Gastrocnemius medialis (tissue), 4 donors: ENCODE measurements at regions of chr20 and their contacts with region 1.

Region 1: GRCh38 chr20:31674895-31675827 is 37.4 kb downstream of the COX4I2 start:
- DNase-seq: peak; percentile 50 to 73
- ATAC-seq: peak in 1 of 2 donors; percentile 15
- H3K4me3 ChIP-seq: peak overlapping the region in 1 of 4 donors; percentile 16
- H3K27ac ChIP-seq: peak overlapping the region; percentile 82 to 98 (median 92)
- H3K4me1 ChIP-seq: peaks cover 81 to 93% of the 10 kb centered on the region in 2 donors
- H3K27me3 ChIP-seq: no peaks in the 10 kb centered on the region
- CTCF ChIP-seq: no peak
- POLR2A ChIP-seq: no peak

Region 2: DNA sequence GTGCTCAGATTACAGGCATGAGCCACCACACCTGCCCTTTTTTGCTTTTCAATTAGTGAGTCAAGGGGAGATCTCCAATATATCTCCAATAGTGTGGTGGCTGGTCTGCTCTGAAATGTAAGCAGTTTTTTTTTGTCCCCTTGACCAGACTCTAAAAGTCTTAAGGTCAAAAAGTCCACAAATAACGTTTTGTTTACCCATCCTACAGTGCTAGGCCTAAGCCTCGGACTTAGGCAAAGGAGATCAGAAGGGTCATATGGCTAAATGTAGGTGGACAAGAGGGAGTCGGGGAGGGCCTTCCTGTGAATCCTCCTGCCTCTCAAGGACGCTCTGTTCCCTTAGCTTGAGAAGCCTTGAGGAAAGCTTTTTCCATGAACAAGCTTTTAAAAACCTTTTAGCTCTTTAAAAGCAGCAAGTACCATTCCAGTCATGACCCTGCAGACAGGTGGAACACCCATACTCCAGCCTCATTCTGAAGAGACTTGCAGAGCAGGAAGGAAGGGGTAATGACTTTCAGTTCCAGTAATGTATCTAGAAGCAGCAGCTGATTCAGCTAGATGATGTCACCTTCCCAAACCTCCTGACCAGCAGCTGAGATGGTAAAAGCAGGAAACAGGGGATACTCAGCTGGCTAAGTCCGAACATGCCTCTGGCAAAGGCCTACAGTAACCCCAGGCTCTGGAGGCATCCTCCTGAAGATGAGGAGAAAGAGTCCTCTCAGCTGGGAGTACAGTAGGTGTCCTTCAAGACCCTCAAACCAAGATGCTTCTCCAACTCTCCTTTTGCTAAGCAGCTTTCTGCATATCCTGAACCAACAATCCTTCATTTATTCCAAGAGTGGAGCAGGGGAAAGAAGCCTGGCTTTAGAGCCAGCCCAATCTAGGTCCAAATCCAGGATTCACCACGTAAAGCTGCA is 23.9 kb after region 1 on chr20:
- in situ Hi-C with region 1: no loop called
- intact Hi-C with region 1: loop called (anchors 2 kb)
- DNase-seq: peak; percentile 83 to 87
- ATAC-seq: peak; percentile 96 to 97
- H3K4me3 ChIP-seq: peak overlapping the region in 1 of 4 donors; percentile 30
- H3K27ac ChIP-seq: peak overlapping the region; percentile 86 to 93 (median 90)
- H3K4me1 ChIP-seq: peaks cover 75 to 87% of the 10 kb centered on the region in 2 donors
- H3K27me3 ChIP-seq: no peaks in the 10 kb centered on the region
- CTCF ChIP-seq: no peak
- POLR2A ChIP-seq: peak; percentile 54 to 65

Region 3: DNA sequence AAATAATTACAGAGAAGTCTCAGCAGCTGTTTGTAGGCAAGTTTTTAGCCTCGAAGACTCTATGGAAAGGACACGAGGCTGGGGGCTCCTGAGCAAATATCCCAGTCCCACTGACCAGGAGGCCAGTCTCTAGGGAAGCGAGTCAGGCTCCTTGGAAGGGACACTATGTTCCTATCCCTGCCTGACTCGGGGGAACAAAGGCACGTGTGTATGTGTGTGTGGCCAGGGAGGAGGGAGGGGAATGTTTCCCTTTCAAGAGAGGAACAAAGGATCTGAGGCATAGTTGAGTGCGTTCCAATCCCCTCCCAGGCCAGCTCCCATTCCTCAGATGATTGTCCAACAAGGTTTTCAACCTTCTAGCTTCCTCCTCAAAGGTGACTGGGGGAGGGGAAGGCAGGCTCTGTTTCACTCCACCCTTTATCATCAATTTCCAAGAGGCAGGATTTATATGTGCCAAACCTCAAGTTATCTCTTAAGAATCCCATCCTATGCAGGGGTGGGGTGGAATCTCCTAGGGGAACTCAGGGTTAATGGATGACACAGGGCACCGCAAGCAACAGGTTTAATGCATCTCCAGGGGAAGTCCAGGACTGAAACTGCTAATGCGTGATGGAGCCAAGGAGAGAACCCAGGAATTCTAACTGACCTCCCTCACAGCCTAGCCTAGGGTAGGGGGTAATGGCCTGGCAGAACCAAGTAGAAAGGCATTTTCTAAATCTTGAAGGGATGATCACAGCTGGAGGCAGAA is 37.6 kb after region 1 on chr20:
- in situ Hi-C with region 1: no loop called
- intact Hi-C with region 1: loop called (anchors 2 kb)
- DNase-seq: peak; percentile 96 to 97
- ATAC-seq: peak; percentile 76 to 77
- H3K4me3 ChIP-seq: peak overlapping the region; percentile 34 to 48 (median 40)
- H3K27ac ChIP-seq: peak overlapping the region; percentile 97 to 98 (median 97)
- H3K4me1 ChIP-seq: peaks cover 90 to 95% of the 10 kb centered on the region in 2 donors
- H3K27me3 ChIP-seq: no peaks in the 10 kb centered on the region
- CTCF ChIP-seq: no peak
- POLR2A ChIP-seq: peak; percentile 55 to 69

Region 4: GRCh38 chr20:31811796-31812728 is 136.9 kb after region 1 on chr20:
- in situ Hi-C with region 1: loop called in 1 of 4 experiments (anchors 25 kb)
- intact Hi-C with region 1: loop called (anchors 5 kb)
- DNase-seq: peak; percentile 57 to 90
- ATAC-seq: peak; percentile 72 to 80
- H3K4me3 ChIP-seq: peak overlapping the region; percentile 5 to 38 (median 22)
- H3K27ac ChIP-seq: peak overlapping the region; percentile 87 to 95 (median 93)
- H3K4me1 ChIP-seq: peaks cover 73 to 81% of the 10 kb centered on the region in 2 donors
- H3K27me3 ChIP-seq: no peaks in the 10 kb centered on the region
- CTCF ChIP-seq: no peak
- POLR2A ChIP-seq: peak; percentile 7 to 41

Region 5: GRCh38 chr20:32077190-32077589 is 402.0 kb after region 1 on chr20:
- in situ Hi-C with region 1: no loop called
- intact Hi-C with region 1: no loop called
- DNase-seq: no peak
- ATAC-seq: no peak
- H3K4me3 ChIP-seq: no peak overlapping the region
- H3K27ac ChIP-seq: no peak overlapping the region
- H3K4me1 ChIP-seq: no peaks in the 10 kb centered on the region
- H3K27me3 ChIP-seq: peaks cover 0 to 4% (median 3%) of the 10 kb centered on the region in 3 donors
- CTCF ChIP-seq: no peak
- POLR2A ChIP-seq: no peak